ENCODE measurements at regions of chr17 and their contacts with region 1.

Region 1: GRCh38 chr17:70100983-70101382 is 26.0 kb downstream of the KCNJ16 start:
- DNase-seq: peak in 1 of 2 experiments; percentile 16
- H3K4me3 ChIP-seq: no peak overlapping the region
- H3K4me3 Mint-ChIP-seq: no peak overlapping the region
- H3K27ac Mint-ChIP-seq: no peak overlapping the region
- H3K4me1 ChIP-seq: no peaks in the 10 kb centered on the region
- H3K4me1 Mint-ChIP-seq: peaks cover 9% of the 10 kb centered on the region
- H3K27me3 ChIP-seq: no peaks in the 10 kb centered on the region
- H3K27me3 Mint-ChIP-seq: no peaks in the 10 kb centered on the region
- CTCF ChIP-seq: peak; percentile 18 to 23

Region 2: GRCh38 chr17:69574257-69575197 is 526.5 kb before region 1 on chr17:
- CTCF ChIA-PET with region 1: no interaction called
- POLR2A ChIA-PET with region 1: no interaction called
- intact Hi-C with region 1: loop called (anchors 2 kb)
- DNase-seq: no peak
- H3K4me3 ChIP-seq: no peak overlapping the region
- H3K4me3 Mint-ChIP-seq: no peak overlapping the region
- H3K27ac Mint-ChIP-seq: no peak overlapping the region
- H3K4me1 ChIP-seq: no peaks in the 10 kb centered on the region
- H3K4me1 Mint-ChIP-seq: no peaks in the 10 kb centered on the region
- H3K27me3 ChIP-seq: no peaks in the 10 kb centered on the region
- H3K27me3 Mint-ChIP-seq: peaks cover 8% of the 10 kb centered on the region
- CTCF ChIP-seq: no peak

Region 3: GRCh38 chr17:70029019-70029767 is 71.8 kb before region 1 on chr17:
- CTCF ChIA-PET with region 1: no interaction called
- POLR2A ChIA-PET with region 1: no interaction called
- intact Hi-C with region 1: loop called (anchors 2 kb)
- DNase-seq: peak in 1 of 2 experiments; percentile 40
- H3K4me3 ChIP-seq: no peak overlapping the region
- H3K4me3 Mint-ChIP-seq: no peak overlapping the region
- H3K27ac Mint-ChIP-seq: no peak overlapping the region
- H3K4me1 ChIP-seq: peaks cover 7% of the 10 kb centered on the region
- H3K4me1 Mint-ChIP-seq: peaks cover 8% of the 10 kb centered on the region
- H3K27me3 ChIP-seq: no peaks in the 10 kb centered on the region
- H3K27me3 Mint-ChIP-seq: no peaks in the 10 kb centered on the region
- CTCF ChIP-seq: no peak

Measured in Caco-2 (cell line).